ENCODE measurements at regions of chr12 and their contacts with region 1.

Region 1: DNA sequence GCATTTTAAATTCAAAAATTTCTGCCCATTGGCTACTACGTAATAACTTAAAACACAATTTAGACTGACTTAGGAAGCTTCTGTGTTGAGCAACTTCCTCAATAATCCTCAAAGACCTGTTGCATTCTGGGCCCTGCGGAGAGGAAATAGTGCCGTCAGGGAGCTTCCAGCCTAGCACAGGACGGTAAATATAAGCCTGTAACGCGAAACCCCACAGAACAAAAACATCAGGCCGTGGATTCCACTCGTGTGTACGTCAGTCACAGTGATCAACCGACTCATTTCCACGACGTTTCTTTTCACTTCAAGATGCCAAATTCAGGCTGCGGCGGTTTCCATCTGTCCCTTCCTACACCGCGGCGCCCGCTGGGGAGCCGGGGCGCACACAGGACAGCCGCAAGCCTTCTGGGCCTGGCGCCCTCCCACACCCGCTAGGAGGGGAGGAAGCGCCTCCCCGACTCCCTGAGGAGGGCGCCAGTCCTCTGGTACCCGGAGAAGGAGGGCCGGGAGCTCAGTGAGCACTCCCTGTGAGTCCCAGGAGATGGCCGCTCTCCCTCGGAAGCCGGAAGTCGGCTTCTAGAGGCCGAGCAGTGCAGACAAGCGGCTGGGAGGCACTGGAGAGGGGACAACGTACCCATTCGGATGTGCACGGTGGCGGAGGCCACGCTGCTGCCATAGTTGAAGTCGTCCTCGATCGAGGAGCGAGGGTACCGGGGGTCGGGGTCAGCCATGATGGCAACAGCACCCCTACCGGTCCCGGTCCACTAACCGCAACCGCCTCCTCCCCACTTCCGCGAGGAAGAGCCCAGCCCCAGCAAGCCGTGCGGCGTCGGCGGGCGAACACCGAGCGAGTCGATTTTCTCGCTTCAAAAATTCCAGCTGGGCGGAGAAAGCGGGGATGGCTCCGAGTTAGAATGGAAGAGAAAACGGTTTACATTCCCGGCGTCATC is at the start of gene TMBIM4:
- DNase-seq: peak; percentile 86
- ATAC-seq: peak; percentile 97
- H3K4me3 ChIP-seq: peak within 1 kb of the TSS; percentile 75 to 99 (median 86)
- H3K27ac ChIP-seq: peak within 1 kb of the TSS; percentile 94
- H3K4me1 ChIP-seq: peaks cover 27% of the 10 kb centered on the region
- H3K27me3 ChIP-seq: no peaks in the 10 kb centered on the region
- CTCF ChIP-seq: peak; percentile 67
- EP300 ChIP-seq: peak in 1 of 2 experiments; percentile 26; a peak in 1 of 4 replicates
- POLR2A ChIP-seq: peak; percentile 72 to 76
- RAD21 ChIP-seq: peak; percentile 60
- total RNA-seq, gene TMBIM4: 42.7 and 60.5 TPM in 2 replicates

Region 2: GRCh38 chr12:65740873-65741600 is 428.5 kb before region 1 on chr12:
- CTCF ChIA-PET with region 1: no interaction called
- POLR2A ChIA-PET with region 1: no interaction called
- in situ Hi-C with region 1: no loop called
- intact Hi-C with region 1: no loop called
- DNase-seq: peak; percentile 69
- ATAC-seq: peak; percentile 93
- H3K4me3 ChIP-seq: peak overlapping the region; percentile 66 to 81 (median 80)
- H3K27ac ChIP-seq: no peak overlapping the region
- H3K4me1 ChIP-seq: peaks cover 7% of the 10 kb centered on the region; the same call in 1 of the 2 replicates
- H3K27me3 ChIP-seq: peaks cover 3 to 14% of the 10 kb centered on the region in 2 experiments; a peak in 3 of 5 replicates
- CTCF ChIP-seq: no peak
- EP300 ChIP-seq: no peak
- POLR2A ChIP-seq: 0 out of 4 replicates have a peak, but pooled peaks of 1 of the 2 experiments have one; percentile 33
- RAD21 ChIP-seq: no peak

Region 3: GRCh38 chr12:66130277-66131066 is 39.0 kb before region 1 on chr12 and contains the start of gene LLPH:
- CTCF ChIA-PET with region 1: no interaction called
- POLR2A ChIA-PET with region 1: interaction called, 33 read pairs
- in situ Hi-C with region 1: no loop called
- intact Hi-C with region 1: loop called (anchors 5 kb)
- DNase-seq: peak; percentile 88
- ATAC-seq: peak; percentile 98
- H3K4me3 ChIP-seq: peak within 1 kb of the TSS; percentile 91 to 97 (median 93)
- H3K27ac ChIP-seq: peak within 1 kb of the TSS; percentile 69
- H3K4me1 ChIP-seq: peaks cover 42% of the 10 kb centered on the region
- H3K27me3 ChIP-seq: no peaks in the 10 kb centered on the region; a peak in 1 of 5 replicates
- CTCF ChIP-seq: no peak
- EP300 ChIP-seq: peak in 1 of 2 experiments; percentile 30; a peak in 1 of 4 replicates
- POLR2A ChIP-seq: peak; percentile 90 to 91
- RAD21 ChIP-seq: no peak
- total RNA-seq, gene LLPH: 25.6 and 38.6 TPM in 2 replicates

Region 4: DNA sequence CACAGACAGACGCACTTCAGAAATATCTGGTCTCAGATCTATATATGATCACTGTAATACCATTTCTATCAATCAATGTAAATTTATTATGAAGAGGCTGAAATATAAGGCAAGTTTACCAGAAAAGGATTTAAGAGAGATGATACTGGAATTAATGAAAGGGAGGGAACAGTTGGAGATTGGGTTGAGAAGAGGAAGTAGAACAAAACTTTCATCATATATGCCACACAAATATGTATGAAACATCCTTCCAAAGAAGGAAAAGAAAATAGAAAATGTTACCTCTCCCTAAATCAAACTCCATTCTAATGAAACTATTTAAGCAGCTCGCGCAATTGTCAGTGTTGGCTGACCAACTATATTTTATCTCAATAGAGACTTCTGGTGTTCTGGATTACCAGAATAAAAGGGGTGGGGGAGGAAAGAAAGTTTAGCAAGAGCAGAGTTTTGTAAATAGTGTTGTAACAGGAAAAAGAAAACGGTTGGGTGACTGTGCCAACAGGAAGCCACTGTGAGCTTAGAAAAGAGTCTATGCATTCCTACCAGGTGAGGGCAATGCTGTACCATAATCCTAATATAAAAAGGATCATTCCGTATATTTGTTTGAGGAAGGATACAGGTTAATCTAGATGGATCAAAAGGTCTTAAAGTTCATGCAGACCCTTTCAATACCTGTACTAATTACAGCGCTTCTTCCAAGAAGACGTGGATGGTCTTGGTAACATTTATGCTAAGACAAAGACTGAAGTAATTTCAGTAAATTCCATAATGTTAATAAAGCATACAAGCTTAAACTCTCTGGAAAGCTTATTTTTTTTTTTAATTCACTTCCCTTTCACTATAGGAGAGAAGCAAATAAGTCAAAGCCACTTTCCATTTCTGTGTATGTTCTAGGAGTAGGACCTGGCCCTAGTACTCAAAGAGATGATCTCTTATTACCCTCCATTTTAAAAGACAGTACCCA is 24.4 kb before region 1 on chr12:
- CTCF ChIA-PET with region 1: no interaction called
- POLR2A ChIA-PET with region 1: interaction called, 14 read pairs
- in situ Hi-C with region 1: no loop called
- intact Hi-C with region 1: no loop called
- DNase-seq: peak; percentile 69
- ATAC-seq: peak; percentile 84
- H3K4me3 ChIP-seq: no peak overlapping the region
- H3K27ac ChIP-seq: no peak overlapping the region
- H3K4me1 ChIP-seq: peaks cover 7% of the 10 kb centered on the region; the same call in 1 of the 2 replicates
- H3K27me3 ChIP-seq: no peaks in the 10 kb centered on the region
- CTCF ChIP-seq: peak; percentile 66
- EP300 ChIP-seq: no peak
- POLR2A ChIP-seq: no peak
- RAD21 ChIP-seq: no peak

Region 5: GRCh38 chr12:66159123-66159522 is 10.4 kb before region 1 on chr12:
- CTCF ChIA-PET with region 1: no interaction called
- POLR2A ChIA-PET with region 1: interaction called, 14 read pairs
- in situ Hi-C with region 1: no loop called
- intact Hi-C with region 1: no loop called
- DNase-seq: no peak
- ATAC-seq: no peak
- H3K4me3 ChIP-seq: no peak overlapping the region
- H3K27ac ChIP-seq: no peak overlapping the region
- H3K4me1 ChIP-seq: no peaks in the 10 kb centered on the region
- H3K27me3 ChIP-seq: no peaks in the 10 kb centered on the region
- CTCF ChIP-seq: no peak
- EP300 ChIP-seq: no peak
- POLR2A ChIP-seq: no peak
- RAD21 ChIP-seq: no peak

Region 6: DNA sequence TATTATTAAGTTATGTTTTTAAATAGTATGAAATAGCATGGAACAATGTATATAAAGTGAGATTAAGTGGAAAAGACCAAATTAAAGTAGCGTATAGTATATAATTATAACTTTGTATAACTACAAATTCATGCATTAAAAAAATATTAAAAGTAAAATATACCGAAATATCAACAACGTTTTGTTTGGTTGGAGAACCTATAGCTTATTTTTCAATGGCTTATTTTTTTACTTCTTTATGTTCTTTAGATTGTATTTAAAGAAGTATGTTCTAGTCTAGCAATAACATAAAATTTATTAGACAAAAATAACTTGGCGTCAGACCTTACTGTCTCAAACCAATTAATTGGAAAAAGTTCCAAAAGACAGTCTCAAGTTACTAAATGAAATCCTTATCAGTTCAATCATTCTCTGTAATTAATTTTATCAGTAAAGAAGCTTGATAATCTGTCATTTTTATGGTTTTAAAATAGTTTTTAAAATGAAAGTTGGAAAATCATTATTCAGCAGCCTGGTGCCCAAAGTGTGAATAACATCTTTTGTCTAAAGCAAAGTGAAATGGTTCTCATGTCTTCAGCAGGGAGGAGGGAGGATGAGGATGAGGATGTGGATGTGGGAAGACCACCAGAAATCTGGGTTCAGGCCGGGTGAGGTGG is 66.3 kb after region 1 on chr12:
- CTCF ChIA-PET with region 1: no interaction called
- POLR2A ChIA-PET with region 1: interaction called, 3 read pairs
- in situ Hi-C with region 1: no loop called
- intact Hi-C with region 1: loop called (anchors 2 kb)
- DNase-seq: no peak
- ATAC-seq: no peak
- H3K4me3 ChIP-seq: peak overlapping the region in 2 of 3 experiments; percentile 20 to 50; a peak in 2 of 6 replicates
- H3K27ac ChIP-seq: no peak overlapping the region
- H3K4me1 ChIP-seq: no peaks in the 10 kb centered on the region
- H3K27me3 ChIP-seq: peaks cover 0 to 22% of the 10 kb centered on the region in 2 experiments; a peak in 2 of 5 replicates
- CTCF ChIP-seq: no peak
- EP300 ChIP-seq: no peak
- POLR2A ChIP-seq: no peak
- RAD21 ChIP-seq: no peak

Region 7: GRCh38 chr12:66301944-66302826 is 132.7 kb after region 1 on chr12 and contains the start of gene HELB:
- CTCF ChIA-PET with region 1: no interaction called
- POLR2A ChIA-PET with region 1: interaction called, 17 read pairs
- in situ Hi-C with region 1: no loop called
- intact Hi-C with region 1: no loop called
- DNase-seq: peak; percentile 96
- ATAC-seq: peak; percentile 99
- H3K4me3 ChIP-seq: peak within 1 kb of the TSS; percentile 75 to 89 (median 77)
- H3K27ac ChIP-seq: peak within 1 kb of the TSS; percentile 65
- H3K4me1 ChIP-seq: peaks cover 25% of the 10 kb centered on the region
- H3K27me3 ChIP-seq: 0 out of 5 replicates have a peak, but pooled peaks cover 0 to 5% of the 10 kb centered on the region in 2 experiments
- CTCF ChIP-seq: peak; percentile 17; the same call in 1 of the 2 replicates
- EP300 ChIP-seq: no peak; a peak in 1 of 4 replicates
- POLR2A ChIP-seq: peak; percentile 86 to 88
- RAD21 ChIP-seq: no peak
- total RNA-seq, gene HELB: 3.7 and 4.5 TPM in 2 replicates

Measured in HepG2 (cell line).